Heart right ventricle (tissue), 16 donors: ENCODE measurements at regions of chr3 and their contacts with region 1.

Region 1: DNA sequence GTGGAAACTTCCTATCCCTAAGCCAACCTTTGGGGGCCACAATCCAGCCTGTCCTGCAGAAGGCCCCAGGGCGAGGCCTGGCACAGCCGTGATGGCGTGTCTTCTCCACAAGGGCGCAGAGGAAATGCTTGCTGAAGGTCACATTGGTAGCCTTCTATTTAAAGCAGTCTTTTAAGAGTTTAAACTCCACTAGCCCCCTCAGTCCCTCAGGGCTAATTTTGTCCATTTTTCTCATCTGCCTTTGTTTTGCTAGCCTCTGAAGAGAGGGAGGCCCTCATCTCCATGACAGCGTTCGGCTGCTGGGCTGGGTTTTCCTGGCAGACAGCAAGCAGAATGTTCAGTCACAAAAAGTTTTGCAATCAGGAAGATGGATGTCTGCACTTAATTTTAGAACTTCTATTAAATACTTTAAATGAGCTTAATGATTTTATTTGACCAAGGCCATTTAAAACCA is 40.8 kb downstream of the RARB start:
- DNase-seq: peak; percentile 70 to 72
- ATAC-seq: peak; percentile 84 to 92 (median 87)
- H3K4me3 ChIP-seq: no peak overlapping the region
- H3K27ac ChIP-seq: peak overlapping the region in 7 of 10 donors; percentile 71 to 85 (median 79)
- H3K4me1 ChIP-seq: peaks cover 16 to 83% (median 60%) of the 10 kb centered on the region in 9 donors
- H3K27me3 ChIP-seq: no peaks in the 10 kb centered on the region
- CTCF ChIP-seq: peak in 8 of 9 donors; percentile 9 to 52 (median 38)

Region 2: DNA sequence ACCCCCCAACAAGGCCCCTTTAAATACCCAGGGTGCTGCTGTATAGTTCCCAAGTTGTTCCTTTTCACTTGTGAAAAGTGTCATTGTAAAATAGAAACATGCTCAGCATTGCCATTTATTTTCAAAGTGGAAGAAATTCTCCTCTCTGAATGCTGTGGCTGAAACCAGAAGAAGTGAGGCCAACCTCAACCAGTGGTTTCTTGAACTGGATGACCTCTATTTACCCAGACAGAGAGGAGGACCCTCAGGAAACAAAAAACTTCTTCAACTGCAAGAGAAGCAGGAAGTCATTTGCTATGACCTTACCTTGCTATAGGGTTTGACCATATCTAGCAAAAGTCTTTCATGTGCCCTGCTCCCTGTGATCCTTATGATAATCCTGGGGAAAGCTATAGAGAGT is 250.5 kb before region 1 on chr3:
- intact Hi-C with region 1: no loop called
- DNase-seq: no peak
- ATAC-seq: no peak
- H3K4me3 ChIP-seq: no peak overlapping the region
- H3K27ac ChIP-seq: no peak overlapping the region
- H3K4me1 ChIP-seq: no peaks in the 10 kb centered on the region
- H3K27me3 ChIP-seq: no peaks in the 10 kb centered on the region
- CTCF ChIP-seq: no peak

Region 3: GRCh38 chr3:25291101-25291905 is 177.6 kb before region 1 on chr3:
- intact Hi-C with region 1: no loop called
- DNase-seq: no peak
- ATAC-seq: no peak
- H3K4me3 ChIP-seq: no peak overlapping the region
- H3K27ac ChIP-seq: no peak overlapping the region
- H3K4me1 ChIP-seq: no peaks in the 10 kb centered on the region
- H3K27me3 ChIP-seq: no peaks in the 10 kb centered on the region
- CTCF ChIP-seq: no peak

Region 4: DNA sequence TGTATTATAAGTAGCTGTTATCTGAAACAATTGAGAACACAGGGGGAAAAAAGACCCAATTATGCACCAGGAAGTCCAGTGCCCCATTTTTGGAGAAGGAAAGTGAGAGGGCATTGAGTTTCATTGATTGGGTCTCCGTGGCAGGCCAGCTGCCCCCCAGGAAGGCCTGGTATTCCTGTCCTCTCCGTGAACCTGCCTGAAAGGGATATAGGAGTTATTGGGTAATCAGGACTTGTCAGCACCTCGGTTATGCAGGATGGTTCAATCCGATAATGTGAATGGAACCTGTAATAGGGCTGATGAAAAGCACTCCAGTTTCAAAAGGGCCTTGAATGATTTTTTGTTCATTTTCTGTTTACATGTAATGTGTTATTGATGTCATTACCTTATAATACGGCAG is 162.8 kb before region 1 on chr3:
- intact Hi-C with region 1: no loop called
- DNase-seq: no peak
- ATAC-seq: no peak
- H3K4me3 ChIP-seq: no peak overlapping the region
- H3K27ac ChIP-seq: no peak overlapping the region
- H3K4me1 ChIP-seq: no peaks in the 10 kb centered on the region
- H3K27me3 ChIP-seq: no peaks in the 10 kb centered on the region
- CTCF ChIP-seq: no peak

Region 5: DNA sequence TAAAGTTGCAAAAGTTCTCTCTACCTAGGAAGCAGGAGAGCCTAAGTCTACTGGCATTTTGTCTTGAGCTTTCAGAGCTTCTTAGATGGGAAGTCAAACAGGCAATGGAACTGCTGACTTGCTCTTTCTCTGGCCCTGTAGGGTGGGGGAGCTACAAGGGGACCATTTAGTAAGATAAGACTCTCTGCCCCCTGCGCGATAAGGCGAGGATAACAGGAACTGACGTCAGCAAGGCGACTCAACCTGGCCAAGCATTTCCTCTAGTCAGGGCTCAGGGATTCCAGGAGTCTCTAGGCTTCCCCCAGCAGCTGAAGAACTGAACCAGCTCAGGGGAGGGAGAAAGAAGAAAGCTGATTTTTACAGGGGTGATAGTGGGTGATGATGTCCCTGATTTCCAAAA is 35.0 kb before region 1 on chr3:
- intact Hi-C with region 1: loop called in 5 of 10 experiments (anchors 5 kb)
- DNase-seq: peak; percentile 17 to 32
- ATAC-seq: peak; percentile 26 to 78 (median 56)
- H3K4me3 ChIP-seq: peak overlapping the region in 4 of 10 donors; percentile 10 to 81 (median 43)
- H3K27ac ChIP-seq: peak overlapping the region in 8 of 10 donors; percentile 27 to 97 (median 90)
- H3K4me1 ChIP-seq: peaks cover 2 to 52% (median 32%) of the 10 kb centered on the region in 9 donors
- H3K27me3 ChIP-seq: peaks cover 0 to 8% (median 0%) of the 10 kb centered on the region in 7 donors
- CTCF ChIP-seq: no peak

Region 6: GRCh38 chr3:25558111-25558510 is 89.2 kb after region 1 on chr3:
- intact Hi-C with region 1: loop called in 2 of 10 experiments (anchors 5 kb)
- DNase-seq: peak in 1 of 2 donors; percentile 35
- ATAC-seq: peak in 7 of 8 donors; percentile 38 to 65 (median 46)
- H3K4me3 ChIP-seq: no peak overlapping the region
- H3K27ac ChIP-seq: peak overlapping the region in 3 of 10 donors; percentile 3 to 61 (median 52)
- H3K4me1 ChIP-seq: peaks cover 8 to 72% (median 55%) of the 10 kb centered on the region in 9 donors
- H3K27me3 ChIP-seq: no peaks in the 10 kb centered on the region
- CTCF ChIP-seq: no peak